WTC11 (cell line): ENCODE measurements at regions of chr2 and their contacts with region 1.

Region 1: GRCh38 chr2:30239308-30239985 is 8.1 kb downstream of the LBH start:
- DNase-seq: peak; percentile 84
- ATAC-seq: peak; percentile 94
- H3K4me3 Mint-ChIP-seq: no peak overlapping the region
- H3K27ac Mint-ChIP-seq: 0 out of 2 replicates have a peak overlapping the region, but pooled peaks have one; percentile 18
- H3K4me1 Mint-ChIP-seq: peaks cover 26% of the 10 kb centered on the region
- H3K27me3 Mint-ChIP-seq: no peaks in the 10 kb centered on the region
- CTCF ChIP-seq: peak; percentile 97

Region 2: DNA sequence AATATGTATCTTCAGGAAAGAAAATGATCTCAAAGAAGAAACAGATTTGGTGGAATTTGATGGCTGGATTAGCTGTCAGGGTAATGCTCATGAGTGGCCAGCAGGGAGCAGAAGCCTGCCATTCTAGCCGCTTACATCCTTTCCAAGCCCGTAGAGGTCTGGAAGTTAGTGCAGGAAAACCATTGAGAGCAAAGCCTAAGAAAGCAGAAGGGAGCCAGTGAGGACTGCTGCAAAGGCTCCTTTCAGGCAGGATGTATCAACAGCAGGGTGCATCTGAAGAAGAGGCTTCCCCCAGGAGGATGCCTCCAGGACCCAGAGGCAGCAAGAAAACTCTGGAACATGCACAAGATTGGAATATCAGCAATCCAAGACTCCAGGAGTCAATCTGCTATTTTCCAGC is 31.0 kb before region 1 on chr2:
- CTCF ChIA-PET with region 1: interaction called, 14 read pairs
- POLR2A ChIA-PET with region 1: no interaction called
- DNase-seq: peak; percentile 59
- ATAC-seq: peak; percentile 99
- H3K4me3 Mint-ChIP-seq: no peak overlapping the region
- H3K27ac Mint-ChIP-seq: no peak overlapping the region
- H3K4me1 Mint-ChIP-seq: peaks cover 6% of the 10 kb centered on the region
- H3K27me3 Mint-ChIP-seq: no peaks in the 10 kb centered on the region
- CTCF ChIP-seq: peak; percentile 82

Region 3: DNA sequence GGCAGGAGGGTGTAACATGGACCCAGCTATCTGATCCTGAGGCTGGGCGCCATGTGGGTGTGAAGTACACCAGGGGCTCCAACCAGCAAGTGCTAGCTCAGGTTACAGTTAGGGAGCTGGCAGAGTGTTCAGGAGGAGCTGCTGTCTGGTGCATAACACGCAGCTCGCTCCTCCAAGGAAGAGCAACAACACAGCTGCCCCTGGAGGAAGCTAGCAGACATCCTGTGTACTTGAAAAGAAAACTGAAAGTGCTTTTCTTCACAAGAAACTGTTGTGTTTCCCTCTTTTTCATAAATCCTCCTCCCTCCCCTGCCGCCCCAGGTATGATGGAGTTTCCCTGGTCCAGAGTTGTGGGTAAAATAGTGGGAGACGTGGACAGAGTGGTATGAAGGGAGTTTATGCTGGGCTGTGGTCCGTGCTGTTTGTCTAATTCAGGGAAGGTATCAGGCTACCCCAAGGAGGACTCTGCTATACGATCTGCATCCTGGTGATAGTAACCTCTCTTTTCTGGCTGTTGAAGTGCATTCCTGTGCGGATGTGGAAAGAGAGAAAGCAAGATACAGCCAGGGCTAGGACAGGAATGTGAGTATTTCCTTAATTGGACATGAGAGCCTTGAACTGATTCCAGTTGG is 14.2 kb before region 1 on chr2:
- CTCF ChIA-PET with region 1: interaction called, 32 read pairs
- POLR2A ChIA-PET with region 1: no interaction called
- DNase-seq: no peak
- ATAC-seq: peak; percentile 82
- H3K4me3 Mint-ChIP-seq: no peak overlapping the region
- H3K27ac Mint-ChIP-seq: no peak overlapping the region
- H3K4me1 Mint-ChIP-seq: peaks cover 19% of the 10 kb centered on the region
- H3K27me3 Mint-ChIP-seq: peaks cover 27% of the 10 kb centered on the region
- CTCF ChIP-seq: no peak

Region 4: DNA sequence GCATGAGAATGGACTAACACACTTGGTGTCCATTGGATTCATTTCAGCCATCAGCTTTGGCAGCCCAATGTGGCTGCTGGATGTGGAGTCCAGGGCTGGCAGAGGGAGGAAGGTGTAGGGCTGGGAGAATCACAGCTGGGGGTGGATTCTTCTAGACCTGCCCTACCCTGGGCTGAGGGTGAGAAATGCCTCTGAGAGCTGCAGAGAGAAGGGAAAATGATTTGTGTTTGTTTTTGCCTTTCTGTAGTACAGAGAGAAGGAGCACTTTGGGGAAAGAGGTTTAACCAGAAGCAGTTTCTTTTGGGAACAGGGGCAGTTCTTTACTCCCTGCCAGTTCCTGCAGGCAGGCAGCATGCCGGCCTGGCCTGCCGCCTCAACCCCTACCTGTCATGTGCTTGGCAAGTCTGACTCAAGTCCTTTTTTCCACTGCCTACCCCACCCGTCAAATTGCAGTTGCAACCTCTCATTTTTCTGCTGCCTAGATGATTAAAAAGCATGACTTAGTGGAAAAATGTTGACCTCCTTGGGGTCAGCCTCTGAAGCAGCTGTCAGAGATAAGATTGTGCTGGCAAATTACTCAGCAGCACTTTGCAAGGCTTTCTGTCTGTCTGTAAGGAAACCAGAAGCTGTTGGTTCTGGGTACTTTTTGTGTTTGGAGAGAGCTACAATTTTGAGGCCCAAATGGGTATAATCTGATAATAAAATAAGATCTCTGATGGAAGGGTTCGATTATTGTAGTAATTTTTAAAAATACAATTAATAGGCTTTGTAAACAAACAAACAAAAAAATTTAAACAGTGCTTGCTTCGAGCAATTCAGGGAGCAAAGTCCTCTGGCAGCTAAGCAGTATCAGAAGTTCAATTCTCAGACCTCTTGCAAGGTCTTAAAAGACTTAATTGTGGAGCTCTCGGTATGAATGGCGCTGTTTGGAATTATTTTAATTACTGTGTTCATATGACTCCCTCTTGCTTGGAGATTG is 13.6 kb after region 1 on chr2:
- CTCF ChIA-PET with region 1: interaction called, 20 read pairs
- POLR2A ChIA-PET with region 1: no interaction called
- DNase-seq: no peak
- ATAC-seq: peak; percentile 28; the same call in 1 of the 2 replicates
- H3K4me3 Mint-ChIP-seq: no peak overlapping the region
- H3K27ac Mint-ChIP-seq: no peak overlapping the region
- H3K4me1 Mint-ChIP-seq: peaks cover 30% of the 10 kb centered on the region
- H3K27me3 Mint-ChIP-seq: no peaks in the 10 kb centered on the region
- CTCF ChIP-seq: no peak

Region 5: GRCh38 chr2:30287857-30288513 is 48.5 kb after region 1 on chr2:
- CTCF ChIA-PET with region 1: interaction called, 13 read pairs
- POLR2A ChIA-PET with region 1: no interaction called
- DNase-seq: no peak
- ATAC-seq: no peak
- H3K4me3 Mint-ChIP-seq: peak overlapping the region; percentile 5; the same call in 1 of the 2 replicates
- H3K27ac Mint-ChIP-seq: peak overlapping the region; percentile 78
- H3K4me1 Mint-ChIP-seq: peaks cover 58% of the 10 kb centered on the region
- H3K27me3 Mint-ChIP-seq: no peaks in the 10 kb centered on the region; the same call in 1 of the 2 replicates
- CTCF ChIP-seq: no peak

Region 6: GRCh38 chr2:30447149-30448045 is 207.9 kb after region 1 on chr2 and contains the start of gene LCLAT1:
- CTCF ChIA-PET with region 1: interaction called, 11 read pairs
- POLR2A ChIA-PET with region 1: no interaction called
- DNase-seq: peak; percentile 73
- ATAC-seq: peak; percentile 82
- H3K4me3 Mint-ChIP-seq: peak within 1 kb of the TSS; percentile 87
- H3K27ac Mint-ChIP-seq: peak within 1 kb of the TSS; percentile 92; the same call in 1 of the 2 replicates
- H3K4me1 Mint-ChIP-seq: peaks cover 16% of the 10 kb centered on the region
- H3K27me3 Mint-ChIP-seq: peaks cover 13% of the 10 kb centered on the region
- CTCF ChIP-seq: no peak
- total RNA-seq, gene LCLAT1: 18.9 to 22.3 TPM (median 22.1 TPM) in 3 replicates